Activated B cell treated with CpG ODN at 0.5 μM for 24 hours (primary cell): ENCODE measurements at regions of chr15 and their contacts with region 1.

Region 1: GRCh38 chr15:31435261-31435911 is 108.8 kb downstream of the KLF13 start:
- DNase-seq: no peak
- ATAC-seq: peak; percentile 66
- H3K4me3 Mint-ChIP-seq: peak overlapping the region; percentile 80
- H3K27ac Mint-ChIP-seq: peak overlapping the region; percentile 91
- H3K4me1 Mint-ChIP-seq: peaks cover 64% of the 10 kb centered on the region
- H3K27me3 Mint-ChIP-seq: no peaks in the 10 kb centered on the region
- CTCF ChIP-seq: no peak

Region 2: DNA sequence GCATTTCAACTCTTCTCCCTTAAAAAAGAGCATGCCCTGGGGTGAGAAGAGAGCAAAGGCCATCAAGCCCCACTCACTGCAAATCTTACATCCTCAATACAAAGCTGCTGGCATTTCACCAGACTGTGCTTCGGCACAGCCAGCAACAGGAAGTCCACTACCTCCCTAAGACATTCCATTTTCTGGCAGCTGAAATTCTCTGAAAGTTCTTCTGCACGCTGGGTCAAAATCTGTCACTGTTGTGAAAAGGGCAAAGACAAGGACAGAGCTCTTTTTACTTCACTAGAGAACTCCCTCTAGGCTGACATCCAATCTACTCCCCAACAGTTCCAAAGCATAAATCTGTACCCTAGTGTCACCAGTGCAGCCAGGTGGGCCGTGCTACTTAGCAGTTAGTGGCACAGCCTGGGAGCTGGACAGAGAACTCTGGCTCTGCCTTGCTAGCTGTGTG is 450.3 kb before region 1 on chr15:
- CTCF ChIA-PET with region 1: no interaction called
- POLR2A ChIA-PET with region 1: no interaction called
- intact Hi-C with region 1: no loop called
- DNase-seq: no peak
- ATAC-seq: peak; percentile 34
- H3K4me3 Mint-ChIP-seq: peak overlapping the region; percentile 59
- H3K27ac Mint-ChIP-seq: peak overlapping the region; percentile 83
- H3K4me1 Mint-ChIP-seq: peaks cover 75% of the 10 kb centered on the region
- H3K27me3 Mint-ChIP-seq: no peaks in the 10 kb centered on the region
- CTCF ChIP-seq: no peak

Region 3: GRCh38 chr15:31215490-31216214 is 219.7 kb before region 1 on chr15:
- CTCF ChIA-PET with region 1: interaction called, 69 read pairs
- POLR2A ChIA-PET with region 1: interaction called, 39 read pairs
- intact Hi-C with region 1: loop called (anchors 1 kb)
- DNase-seq: peak; percentile 86
- ATAC-seq: peak; percentile 80
- H3K4me3 Mint-ChIP-seq: peak overlapping the region; percentile 88
- H3K27ac Mint-ChIP-seq: peak overlapping the region; percentile 93
- H3K4me1 Mint-ChIP-seq: peaks cover 44% of the 10 kb centered on the region
- H3K27me3 Mint-ChIP-seq: no peaks in the 10 kb centered on the region
- CTCF ChIP-seq: no peak

Region 4: DNA sequence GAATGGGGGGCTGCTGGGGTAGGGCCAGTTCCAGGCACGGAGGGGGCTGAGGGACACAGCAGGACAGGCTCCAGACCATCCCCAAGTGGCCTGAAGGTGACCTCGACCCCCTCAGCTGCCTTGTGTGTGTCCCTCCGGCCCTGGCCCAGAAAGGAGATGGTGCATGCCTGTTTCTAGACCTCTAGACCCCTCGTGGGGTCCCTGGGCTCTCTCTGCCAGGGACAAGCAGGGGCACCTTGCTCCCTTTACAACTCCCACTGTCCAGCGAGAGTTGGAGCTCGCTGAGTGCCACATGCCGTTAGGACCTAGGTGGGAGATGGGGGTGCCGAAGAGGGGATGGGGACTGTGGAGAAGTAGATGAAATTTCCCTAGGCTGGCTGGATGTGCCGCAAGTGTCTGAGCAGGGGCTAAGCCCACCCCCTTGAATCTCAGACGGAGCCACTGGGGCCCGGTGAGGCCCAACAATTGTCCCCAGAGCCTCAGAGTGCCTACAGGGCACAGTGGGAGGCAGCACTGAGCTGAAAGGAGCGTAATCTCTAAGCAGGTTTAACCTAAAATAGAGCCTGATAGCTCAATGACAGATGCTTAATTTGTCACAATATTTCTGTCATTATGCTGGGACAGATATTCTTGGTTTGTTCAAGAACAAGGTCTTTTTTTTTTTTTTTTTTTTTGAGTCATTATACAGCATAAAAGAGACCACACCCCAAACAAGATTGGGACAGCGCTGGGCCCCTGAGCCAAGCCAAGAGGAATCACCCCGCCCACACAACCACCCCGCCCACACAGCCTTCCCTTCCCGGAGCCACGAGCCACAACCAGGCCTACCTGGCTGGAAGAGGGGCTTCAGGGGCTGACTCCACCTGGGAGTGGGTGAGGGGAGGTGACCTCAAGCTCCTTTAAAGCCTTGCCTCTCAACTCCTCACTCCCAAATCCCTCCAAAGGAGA is 132.3 kb before region 1 on chr15:
- CTCF ChIA-PET with region 1: interaction called, 7 read pairs
- POLR2A ChIA-PET with region 1: interaction called, 3 read pairs
- intact Hi-C with region 1: loop called (anchors 1 kb)
- DNase-seq: no peak
- ATAC-seq: peak; percentile 38
- H3K4me3 Mint-ChIP-seq: no peak overlapping the region
- H3K27ac Mint-ChIP-seq: peak overlapping the region; percentile 24
- H3K4me1 Mint-ChIP-seq: peaks cover 40% of the 10 kb centered on the region
- H3K27me3 Mint-ChIP-seq: no peaks in the 10 kb centered on the region
- CTCF ChIP-seq: no peak

Region 5: DNA sequence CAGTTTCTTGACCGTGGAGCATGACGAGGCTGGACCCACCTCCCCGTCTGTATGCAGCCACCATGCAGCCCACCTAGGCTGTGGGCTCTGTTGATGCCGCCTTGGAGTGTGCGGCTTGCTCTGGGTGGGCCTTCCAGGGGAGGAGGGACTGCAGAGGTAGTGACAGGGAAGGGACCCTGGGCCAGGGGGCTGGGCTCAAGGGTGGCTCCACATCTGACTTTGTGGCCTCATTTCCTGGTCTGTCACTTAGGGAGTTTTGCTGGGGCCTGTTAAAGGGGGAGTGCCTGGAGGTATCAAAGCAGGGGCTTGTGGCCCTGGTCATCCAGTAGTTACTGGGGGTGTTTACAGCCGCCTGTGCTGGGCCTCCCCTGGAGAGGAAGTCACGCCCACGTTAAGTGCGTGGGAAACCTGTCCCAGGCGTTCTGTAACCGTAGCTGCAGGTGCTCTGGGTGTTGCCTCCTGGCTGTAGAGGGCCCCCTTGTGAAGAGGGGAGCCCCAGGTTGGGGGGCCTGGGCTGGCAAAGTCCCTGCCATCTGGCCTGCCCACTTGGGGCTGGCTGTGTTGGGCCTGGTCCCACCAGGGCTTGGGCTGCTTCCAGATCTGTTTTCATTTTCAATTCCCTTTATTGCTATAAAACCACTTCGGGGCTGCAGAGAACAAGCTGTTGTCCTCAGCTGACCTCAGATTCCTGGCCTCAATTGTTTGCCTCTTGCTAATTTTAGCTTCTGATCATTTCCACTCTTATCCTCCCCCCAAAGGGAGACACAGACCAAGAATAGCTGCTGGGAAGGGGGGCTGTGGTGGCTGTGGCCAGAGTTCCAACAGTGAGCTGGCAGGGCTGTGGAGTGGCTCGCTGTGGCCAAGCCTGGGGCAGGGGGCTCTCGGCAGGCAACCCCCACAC is 82.2 kb before region 1 on chr15:
- CTCF ChIA-PET with region 1: interaction called, 7 read pairs
- POLR2A ChIA-PET with region 1: interaction called, 16 read pairs
- intact Hi-C with region 1: loop called (anchors 2 kb)
- DNase-seq: peak; percentile 50
- ATAC-seq: peak; percentile 71
- H3K4me3 Mint-ChIP-seq: peak overlapping the region; percentile 68
- H3K27ac Mint-ChIP-seq: peak overlapping the region; percentile 84
- H3K4me1 Mint-ChIP-seq: peaks cover 100% of the 10 kb centered on the region
- H3K27me3 Mint-ChIP-seq: no peaks in the 10 kb centered on the region
- CTCF ChIP-seq: no peak

Region 6: GRCh38 chr15:31391687-31392671 is 43.4 kb before region 1 on chr15:
- CTCF ChIA-PET with region 1: interaction called, 11 read pairs
- POLR2A ChIA-PET with region 1: interaction called, 20 read pairs
- intact Hi-C with region 1: loop called (anchors 1 kb)
- DNase-seq: peak; percentile 78
- ATAC-seq: peak; percentile 91
- H3K4me3 Mint-ChIP-seq: peak overlapping the region; percentile 87
- H3K27ac Mint-ChIP-seq: peak overlapping the region; percentile 35
- H3K4me1 Mint-ChIP-seq: peaks cover 13% of the 10 kb centered on the region
- H3K27me3 Mint-ChIP-seq: no peaks in the 10 kb centered on the region
- CTCF ChIP-seq: no peak

Region 7: DNA sequence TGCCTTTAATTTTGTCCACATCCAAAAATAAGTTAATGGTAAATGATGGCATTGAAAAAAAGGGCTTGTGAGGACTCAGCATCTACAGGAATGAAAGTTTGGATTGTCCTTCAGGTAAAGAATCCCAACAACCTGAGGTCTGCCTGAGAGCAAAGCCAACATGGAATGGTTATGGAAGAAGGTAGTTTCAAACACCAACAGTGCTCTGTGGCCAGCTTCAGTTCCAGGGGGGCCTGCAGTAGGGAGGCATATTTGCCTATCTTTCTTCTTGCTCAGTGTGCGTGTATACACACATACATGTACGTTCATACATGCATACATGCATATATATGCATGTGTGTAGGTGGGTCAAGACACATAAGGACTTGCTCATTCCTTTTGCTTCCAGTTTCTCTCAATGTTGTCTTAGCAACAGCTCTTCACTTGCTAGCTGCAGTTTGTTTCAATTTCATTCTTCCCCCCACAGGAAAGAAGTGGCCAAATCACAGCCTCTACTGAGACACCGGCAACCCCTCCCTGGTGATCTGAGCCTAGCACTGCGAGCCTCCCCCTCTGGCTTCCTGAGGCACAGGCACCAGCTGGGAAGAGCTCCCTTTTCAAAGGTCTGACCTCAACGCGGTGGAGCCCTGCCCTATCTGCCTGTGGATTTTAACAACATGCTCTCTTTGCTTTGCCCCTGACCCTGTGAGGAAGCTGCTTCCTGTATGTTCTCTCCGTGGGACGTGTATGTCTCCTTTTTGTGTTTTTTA is 37.4 kb after region 1 on chr15:
- CTCF ChIA-PET with region 1: interaction called, 8 read pairs
- POLR2A ChIA-PET with region 1: interaction called, 25 read pairs
- intact Hi-C with region 1: loop called (anchors 1 kb)
- DNase-seq: no peak
- ATAC-seq: peak; percentile 80
- H3K4me3 Mint-ChIP-seq: peak overlapping the region; percentile 80
- H3K27ac Mint-ChIP-seq: peak overlapping the region; percentile 93
- H3K4me1 Mint-ChIP-seq: peaks cover 45% of the 10 kb centered on the region
- H3K27me3 Mint-ChIP-seq: no peaks in the 10 kb centered on the region
- CTCF ChIP-seq: no peak